Tibial artery (tissue), 4 donors: ENCODE measurements at regions of chr17 and their contacts with region 1.

Region 1: DNA sequence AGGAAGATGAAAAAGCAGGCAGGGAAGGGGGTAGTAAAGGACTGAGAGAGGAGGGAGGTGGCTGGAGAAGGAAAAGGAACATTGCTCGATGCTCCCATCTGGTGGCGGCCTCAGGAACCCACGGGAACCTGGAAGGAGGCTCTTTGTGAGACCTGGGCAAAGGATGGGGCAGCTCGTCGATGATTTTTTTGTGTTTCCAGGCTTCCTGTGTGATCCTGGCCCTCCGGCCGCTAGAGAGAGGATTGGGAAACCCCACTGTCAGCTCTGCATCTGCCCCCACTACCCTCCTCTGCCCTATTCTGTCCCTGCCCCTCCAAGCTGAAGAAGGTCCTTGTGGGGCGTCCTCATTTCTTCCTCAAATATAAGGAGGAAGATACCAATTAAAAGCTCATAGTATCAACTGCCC is 6.6 kb downstream of the WFIKKN2 start:
- DNase-seq: peak; percentile 59 to 76
- H3K4me3 ChIP-seq: no peak overlapping the region
- H3K27ac ChIP-seq: no peak overlapping the region
- H3K4me1 ChIP-seq: peaks cover 0 to 10% (median 0%) of the 10 kb centered on the region in 4 donors
- H3K27me3 ChIP-seq: no peaks in the 10 kb centered on the region
- CTCF ChIP-seq: peak; percentile 76 to 81

Region 2: DNA sequence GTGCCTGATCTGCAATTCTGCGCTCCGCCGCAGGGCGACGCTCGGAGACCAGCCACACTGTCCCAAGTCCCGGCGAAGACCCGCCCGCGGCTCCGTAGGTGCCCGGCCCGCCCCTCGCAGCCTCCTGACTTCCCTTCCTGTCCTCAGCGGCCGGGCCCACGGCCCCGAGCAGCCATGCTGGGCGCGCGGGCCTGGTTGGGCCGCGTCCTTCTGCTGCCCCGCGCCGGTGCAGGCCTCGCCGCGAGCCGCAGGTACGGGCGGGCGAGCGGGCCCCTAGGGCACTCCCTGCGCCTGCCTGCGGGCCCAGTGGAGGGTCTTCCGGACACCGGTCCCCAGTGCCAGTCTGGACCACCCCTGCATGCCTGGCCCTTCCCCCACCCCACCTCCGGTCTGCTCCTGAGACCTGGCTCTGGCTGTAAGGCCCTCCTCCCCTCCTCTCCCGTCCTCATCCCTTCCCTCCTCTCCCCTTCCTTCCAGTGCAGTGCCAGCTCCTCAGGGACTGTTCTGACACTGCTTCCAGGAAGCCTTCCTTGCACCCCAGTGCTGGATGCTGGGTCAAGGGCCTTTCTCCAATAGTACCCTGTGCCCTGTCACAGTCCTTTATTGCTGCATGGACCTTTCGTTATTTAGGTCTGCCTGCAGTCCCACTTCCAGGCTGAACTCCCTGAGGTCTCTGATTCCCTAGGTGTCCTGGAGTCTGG is 294.8 kb before region 1 on chr17 and contains the start of gene SPATA20:
- intact Hi-C with region 1: loop called (anchors 5 kb)
- DNase-seq: peak; percentile 95 to 96
- H3K4me3 ChIP-seq: peak within 1 kb of the TSS; percentile 55 to 66
- H3K27ac ChIP-seq: peak within 1 kb of the TSS; percentile 68 to 81
- H3K4me1 ChIP-seq: peaks cover 6 to 26% (median 18%) of the 10 kb centered on the region in 4 donors
- H3K27me3 ChIP-seq: no peaks in the 10 kb centered on the region
- CTCF ChIP-seq: peak; percentile 99

Region 3: DNA sequence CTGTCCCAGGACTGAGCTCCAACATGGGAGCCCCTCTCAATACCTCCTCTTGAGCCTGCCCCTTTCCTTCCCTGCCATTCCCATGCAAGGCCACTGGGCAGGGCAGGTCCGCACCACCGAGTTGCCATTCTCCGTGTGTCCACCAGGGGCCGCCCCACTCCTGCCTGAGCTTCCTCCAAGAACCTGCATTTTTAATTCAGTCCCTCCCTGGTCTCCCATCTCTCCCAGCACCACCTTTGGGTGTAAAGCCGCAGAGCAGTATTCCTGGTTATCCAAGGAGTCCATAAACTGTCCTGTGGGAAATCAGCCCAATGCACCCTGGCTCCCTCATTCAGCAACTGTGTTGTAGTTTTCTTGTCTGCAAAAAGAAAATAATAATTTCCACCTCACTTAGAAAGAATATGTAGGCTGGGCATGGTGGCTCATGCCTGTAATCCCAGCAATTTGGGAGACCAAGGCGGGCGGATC is 58.7 kb before region 1 on chr17:
- intact Hi-C with region 1: loop called (anchors 2 kb)
- DNase-seq: peak; percentile 77 to 89
- H3K4me3 ChIP-seq: no peak overlapping the region
- H3K27ac ChIP-seq: no peak overlapping the region
- H3K4me1 ChIP-seq: peaks cover 0 to 19% (median 6%) of the 10 kb centered on the region in 4 donors
- H3K27me3 ChIP-seq: no peaks in the 10 kb centered on the region
- CTCF ChIP-seq: peak; percentile 97 to 99

Region 4: DNA sequence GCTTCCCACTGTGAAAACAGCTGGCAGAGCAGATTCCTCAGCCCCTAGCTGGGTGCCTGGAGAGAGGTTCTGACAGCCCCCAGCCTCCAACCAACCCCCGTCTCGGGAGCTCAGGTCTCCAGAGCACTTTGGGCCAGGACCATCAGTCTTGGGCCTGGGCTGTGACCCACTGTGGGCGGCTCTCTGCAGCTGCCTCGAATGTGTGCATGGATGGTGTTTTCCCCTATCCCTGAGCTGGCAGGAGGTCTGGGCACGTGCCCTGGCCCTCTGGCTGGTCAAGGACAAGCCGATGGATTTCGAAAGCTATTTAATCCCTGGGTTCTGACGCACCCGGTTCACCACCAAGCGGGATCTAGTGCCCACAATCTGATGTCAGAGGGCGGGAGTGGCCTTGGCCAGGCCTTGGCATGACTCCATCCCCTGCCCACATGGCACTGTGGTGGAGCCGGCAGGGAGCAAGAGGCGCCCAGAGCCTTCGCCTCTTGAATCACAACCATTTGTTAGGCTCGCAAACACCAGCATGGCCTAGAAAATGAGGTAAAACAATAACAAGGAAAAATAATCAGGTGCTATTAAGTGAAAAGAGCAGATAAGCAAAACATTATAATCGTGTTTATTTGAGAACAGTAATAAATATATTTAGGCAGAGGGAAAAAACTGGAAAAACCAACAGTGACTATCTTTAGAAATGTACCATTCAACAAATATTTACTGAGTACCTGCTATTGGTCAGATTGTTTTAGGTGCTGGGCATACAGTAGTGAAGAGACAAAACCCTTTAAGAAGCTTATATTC is 93.4 kb after region 1 on chr17:
- intact Hi-C with region 1: no loop called
- DNase-seq: peak; percentile 84 to 95
- H3K4me3 ChIP-seq: no peak overlapping the region
- H3K27ac ChIP-seq: peak overlapping the region; percentile 96 to 97
- H3K4me1 ChIP-seq: peaks cover 3 to 41% (median 29%) of the 10 kb centered on the region in 4 donors
- H3K27me3 ChIP-seq: no peaks in the 10 kb centered on the region
- CTCF ChIP-seq: no peak

Region 5: GRCh38 chr17:51056813-51057510 is 215.0 kb after region 1 on chr17:
- intact Hi-C with region 1: loop called (anchors 10 kb)
- DNase-seq: no peak
- H3K4me3 ChIP-seq: no peak overlapping the region
- H3K27ac ChIP-seq: peak overlapping the region; percentile 45 to 51
- H3K4me1 ChIP-seq: peaks cover 0 to 31% (median 18%) of the 10 kb centered on the region in 4 donors
- H3K27me3 ChIP-seq: no peaks in the 10 kb centered on the region
- CTCF ChIP-seq: peak; percentile 37 to 45

Region 6: GRCh38 chr17:51153210-51154072 is 311.5 kb after region 1 on chr17 and contains the start of gene NME1:
- intact Hi-C with region 1: loop called (anchors 10 kb)
- DNase-seq: peak; percentile 96 to 98
- H3K4me3 ChIP-seq: peak within 1 kb of the TSS; percentile 62 to 83
- H3K27ac ChIP-seq: peak within 1 kb of the TSS; percentile 79 to 82
- H3K4me1 ChIP-seq: peaks cover 0 to 21% (median 6%) of the 10 kb centered on the region in 4 donors
- H3K27me3 ChIP-seq: no peaks in the 10 kb centered on the region
- CTCF ChIP-seq: peak; percentile 66 to 79